WTC11 (cell line): ENCODE measurements at regions of chr17 and their contacts with region 1.

Region 1: DNA sequence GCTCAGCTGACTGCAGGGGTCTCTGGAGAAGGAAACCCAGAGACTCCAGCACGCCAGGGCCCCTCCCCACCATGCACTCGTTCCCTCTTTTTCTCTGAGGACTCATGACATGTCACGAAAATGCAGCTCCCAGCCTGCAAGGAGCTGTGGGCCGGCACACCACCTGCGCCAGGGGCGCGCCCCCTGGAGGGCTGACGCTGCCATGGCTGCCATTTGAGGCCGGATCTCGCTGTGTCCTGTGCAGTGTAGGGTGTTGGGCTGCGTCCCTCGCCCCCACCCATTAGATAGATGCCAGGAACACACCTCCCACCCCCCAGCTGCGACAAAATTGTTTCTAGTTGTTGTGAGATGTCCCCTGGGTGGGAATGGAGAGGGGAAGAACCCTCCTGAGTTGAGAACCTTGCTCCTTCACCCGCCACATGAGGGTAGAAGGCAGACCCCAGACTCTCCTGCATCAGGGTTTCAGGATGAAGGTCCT is 8.2 kb downstream of the SYNGR2 start:
- DNase-seq: peak; percentile 82
- ATAC-seq: peak; percentile 65
- H3K4me3 Mint-ChIP-seq: no peak overlapping the region
- H3K27ac Mint-ChIP-seq: no peak overlapping the region
- H3K4me1 Mint-ChIP-seq: peaks cover 42% of the 10 kb centered on the region
- H3K27me3 Mint-ChIP-seq: no peaks in the 10 kb centered on the region
- CTCF ChIP-seq: peak; percentile 84

Region 2: DNA sequence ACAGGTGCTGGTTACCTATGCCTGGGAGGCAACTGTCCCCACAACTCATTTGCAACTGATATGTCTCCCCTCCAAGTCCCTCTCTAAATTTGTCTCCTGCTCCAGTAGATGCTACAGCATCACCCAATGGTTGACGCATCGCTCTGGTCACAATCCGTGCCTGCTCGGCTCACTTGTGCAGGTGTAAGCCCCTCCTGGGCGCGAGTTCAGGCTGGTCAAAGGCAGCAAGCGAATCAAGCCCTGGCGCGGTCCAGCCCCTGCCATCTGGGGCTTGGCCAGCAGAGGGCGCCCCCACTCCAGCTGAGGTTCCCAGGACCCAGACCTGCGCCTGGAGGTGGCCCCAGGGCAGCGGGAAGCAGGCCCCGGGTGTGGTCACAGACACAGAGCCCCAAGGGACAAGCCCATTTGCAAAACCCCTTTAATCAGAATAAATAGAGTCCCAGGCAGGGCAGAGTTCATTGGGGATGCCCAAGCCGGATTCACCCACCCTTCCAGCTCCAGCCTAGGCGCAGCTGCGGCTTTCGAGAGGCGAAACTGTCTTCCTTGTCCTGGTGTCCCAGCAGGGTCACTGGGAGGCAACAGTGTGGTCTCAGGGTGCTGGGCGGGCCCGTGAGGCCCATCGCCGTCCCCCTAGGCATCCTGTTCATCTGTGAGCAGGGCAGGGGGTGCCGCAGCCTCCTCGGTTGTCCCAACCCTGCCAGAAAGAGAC is 63.9 kb before region 1 on chr17:
- CTCF ChIA-PET with region 1: interaction called, 16 read pairs
- POLR2A ChIA-PET with region 1: interaction called, 4 read pairs
- DNase-seq: peak; percentile 94
- ATAC-seq: peak; percentile 87
- H3K4me3 Mint-ChIP-seq: no peak overlapping the region
- H3K27ac Mint-ChIP-seq: peak overlapping the region; percentile 99
- H3K4me1 Mint-ChIP-seq: peaks cover 2% of the 10 kb centered on the region; the same call in 1 of the 2 replicates
- H3K27me3 Mint-ChIP-seq: no peaks in the 10 kb centered on the region
- CTCF ChIP-seq: peak; percentile 99

Region 3: GRCh38 chr17:78128551-78129350 is 47.8 kb before region 1 on chr17 and contains the start of gene TMC6:
- CTCF ChIA-PET with region 1: interaction called, 82 read pairs
- POLR2A ChIA-PET with region 1: interaction called, 4 read pairs
- DNase-seq: peak; percentile 82
- ATAC-seq: peak; percentile 70
- H3K4me3 Mint-ChIP-seq: peak within 1 kb of the TSS; percentile 80
- H3K27ac Mint-ChIP-seq: no peak within 1 kb of the TSS
- H3K4me1 Mint-ChIP-seq: peaks cover 31% of the 10 kb centered on the region
- H3K27me3 Mint-ChIP-seq: peaks cover 13% of the 10 kb centered on the region
- CTCF ChIP-seq: no peak
- total RNA-seq, gene TMC6: 90.9 to 120 TPM (median 93.2 TPM) in 3 replicates

Region 4: GRCh38 chr17:78140169-78140976 is 36.2 kb before region 1 on chr17:
- CTCF ChIA-PET with region 1: interaction called, 82 read pairs
- POLR2A ChIA-PET with region 1: interaction called, 7 read pairs
- DNase-seq: peak; percentile 100
- ATAC-seq: peak; percentile 94
- H3K4me3 Mint-ChIP-seq: peak overlapping the region; percentile 43
- H3K27ac Mint-ChIP-seq: peak overlapping the region; percentile 72; the same call in 1 of the 2 replicates
- H3K4me1 Mint-ChIP-seq: peaks cover 19% of the 10 kb centered on the region
- H3K27me3 Mint-ChIP-seq: 0 out of 2 replicates have a peak, but pooled peaks cover 3% of the 10 kb centered on the region
- CTCF ChIP-seq: no peak

Region 5: GRCh38 chr17:78186692-78187595 is 10.4 kb after region 1 on chr17 and contains the starts of genes AFMID and TK1:
- CTCF ChIA-PET with region 1: interaction called, 85 read pairs
- POLR2A ChIA-PET with region 1: interaction called, 11 read pairs
- DNase-seq: peak; percentile 100
- ATAC-seq: peak; percentile 96
- H3K4me3 Mint-ChIP-seq: peak within 1 kb of the TSS; percentile 82
- H3K27ac Mint-ChIP-seq: peak within 1 kb of the TSS; percentile 83
- H3K4me1 Mint-ChIP-seq: peaks cover 28% of the 10 kb centered on the region
- H3K27me3 Mint-ChIP-seq: no peaks in the 10 kb centered on the region
- CTCF ChIP-seq: peak; percentile 73; the same call in 1 of the 2 replicates
- total RNA-seq, gene AFMID: 45.1 to 58.7 TPM (median 48.8 TPM) in 3 replicates
- total RNA-seq, gene TK1: 72.5 to 84.1 TPM (median 82.6 TPM) in 3 replicates

Region 6: DNA sequence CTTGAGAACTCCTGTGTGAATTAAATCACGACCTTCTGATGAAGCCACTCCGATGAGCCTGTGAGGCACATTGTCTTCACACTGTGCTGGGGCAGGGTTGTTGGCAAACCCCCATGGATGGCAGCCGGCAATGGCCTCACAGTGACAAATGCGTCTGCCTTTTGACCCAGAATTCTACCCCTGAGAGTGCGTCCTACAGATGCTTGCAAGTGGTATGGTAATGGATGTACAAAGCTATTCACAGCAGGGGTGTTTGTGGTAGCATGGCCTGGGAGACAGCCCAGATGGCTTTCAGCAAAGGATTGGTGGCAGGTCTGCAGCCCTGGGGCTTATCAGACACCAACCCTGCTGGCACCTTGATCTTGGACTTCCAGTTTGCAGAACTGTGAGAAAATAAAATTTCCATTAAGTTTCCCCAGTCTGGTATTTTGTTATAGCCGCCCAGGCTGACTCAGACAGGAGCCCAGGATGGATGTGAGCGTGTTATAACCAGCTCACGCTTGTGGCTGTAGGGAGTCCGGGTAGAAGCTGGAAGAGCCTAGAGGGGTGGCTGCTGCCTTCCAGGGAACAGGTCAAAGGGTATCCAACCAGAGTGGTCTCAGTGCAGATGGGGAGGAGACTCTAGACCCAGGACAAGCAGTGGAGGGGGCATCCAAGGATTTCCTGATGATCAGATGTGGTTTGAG is 20.7 kb after region 1 on chr17:
- CTCF ChIA-PET with region 1: interaction called, 23 read pairs
- POLR2A ChIA-PET with region 1: interaction called, 4 read pairs
- DNase-seq: no peak
- ATAC-seq: peak; percentile 34
- H3K4me3 Mint-ChIP-seq: no peak overlapping the region
- H3K27ac Mint-ChIP-seq: peak overlapping the region; percentile 66; the same call in 1 of the 2 replicates
- H3K4me1 Mint-ChIP-seq: peaks cover 29% of the 10 kb centered on the region
- H3K27me3 Mint-ChIP-seq: no peaks in the 10 kb centered on the region
- CTCF ChIP-seq: no peak

Region 7: DNA sequence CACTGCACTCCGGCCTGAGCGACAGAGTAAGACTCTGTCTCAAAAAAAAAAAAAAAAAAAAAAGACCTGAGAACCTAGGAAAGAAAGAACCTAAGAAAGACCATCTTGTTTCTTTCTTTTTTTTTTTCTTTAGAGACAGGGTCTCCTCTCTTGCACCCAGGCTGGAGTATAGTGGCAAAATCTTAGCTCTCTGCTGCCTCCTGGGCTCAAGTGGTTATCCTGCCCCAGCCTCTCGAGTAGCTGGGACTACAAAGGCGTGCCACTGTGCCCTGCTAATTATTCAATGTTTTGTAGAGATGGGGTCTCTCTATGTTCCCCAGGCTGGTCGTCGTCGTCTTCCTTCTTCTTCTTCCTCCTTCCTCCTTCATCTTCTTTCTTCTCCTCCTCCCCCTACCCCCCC is 29.7 kb after region 1 on chr17:
- CTCF ChIA-PET with region 1: interaction called, 20 read pairs
- POLR2A ChIA-PET with region 1: no interaction called
- DNase-seq: no peak
- ATAC-seq: peak; percentile 88
- H3K4me3 Mint-ChIP-seq: no peak overlapping the region
- H3K27ac Mint-ChIP-seq: no peak overlapping the region
- H3K4me1 Mint-ChIP-seq: no peaks in the 10 kb centered on the region
- H3K27me3 Mint-ChIP-seq: no peaks in the 10 kb centered on the region
- CTCF ChIP-seq: no peak

Region 8: GRCh38 chr17:78241277-78242023 is 64.9 kb after region 1 on chr17:
- CTCF ChIA-PET with region 1: no interaction called
- POLR2A ChIA-PET with region 1: no interaction called
- DNase-seq: no peak
- ATAC-seq: peak; percentile 88
- H3K4me3 Mint-ChIP-seq: no peak overlapping the region
- H3K27ac Mint-ChIP-seq: peak overlapping the region; percentile 77; the same call in 1 of the 2 replicates
- H3K4me1 Mint-ChIP-seq: peaks cover 4% of the 10 kb centered on the region; the same call in 1 of the 2 replicates
- H3K27me3 Mint-ChIP-seq: no peaks in the 10 kb centered on the region
- CTCF ChIP-seq: no peak